Heart left ventricle (tissue), 16 donors: ENCODE measurements at regions of chr1 and their contacts with region 1.

Region 1: DNA sequence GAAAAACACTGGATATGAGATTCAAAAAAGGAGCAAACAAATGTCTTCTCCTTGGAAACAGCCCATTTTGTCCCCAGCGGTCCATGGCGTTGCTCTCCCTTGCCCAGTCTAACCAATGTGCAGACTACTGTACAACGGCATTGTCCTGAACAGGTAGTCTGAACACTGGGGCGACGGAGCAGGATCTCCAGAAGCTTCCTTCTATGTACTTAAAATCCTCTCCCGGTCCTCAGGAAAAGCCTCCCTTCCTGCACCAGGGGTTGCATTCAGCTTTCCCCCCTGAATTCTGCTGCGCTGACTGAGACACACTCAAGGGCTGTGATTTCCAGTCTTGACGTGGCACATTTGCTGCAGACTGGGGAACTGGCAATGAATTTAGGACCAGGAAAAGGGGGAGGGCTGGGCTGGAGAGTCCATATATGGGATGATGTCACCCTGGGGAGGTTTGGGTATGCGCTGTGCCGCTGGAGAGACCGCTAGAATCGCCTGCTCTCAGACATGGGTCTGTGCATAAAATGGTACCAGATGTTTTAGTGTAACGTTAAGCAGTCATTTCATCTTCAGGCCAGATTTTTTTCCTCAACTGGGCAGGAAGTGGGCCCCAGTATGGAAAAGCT is 275.9 kb upstream of the C1orf105 start:
- DNase-seq: peak; percentile 80 to 87 (median 85)
- ATAC-seq: peak; percentile 95 to 96 (median 96)
- H3K4me3 ChIP-seq: peak overlapping the region; percentile 25 to 70 (median 56)
- H3K27ac ChIP-seq: peak overlapping the region; percentile 70 to 89 (median 84)
- H3K4me1 ChIP-seq: peaks cover 0 to 39% (median 5%) of the 10 kb centered on the region in 12 donors
- H3K27me3 ChIP-seq: no peaks in the 10 kb centered on the region
- CTCF ChIP-seq: no peak
- POLR2A ChIP-seq: peak in 1 of 2 donors; percentile 86

Region 2: GRCh38 chr1:172180501-172181285 is 36.1 kb after region 1 on chr1:
- intact Hi-C with region 1: loop called in 5 of 10 experiments (anchors 2 to 5 kb)
- DNase-seq: peak; percentile 48 to 71 (median 61)
- ATAC-seq: peak; percentile 51 to 92 (median 84)
- H3K4me3 ChIP-seq: peak overlapping the region in 10 of 12 donors; percentile 6 to 45 (median 26)
- H3K27ac ChIP-seq: peak overlapping the region; percentile 22 to 93 (median 78)
- H3K4me1 ChIP-seq: peaks cover 4 to 43% (median 17%) of the 10 kb centered on the region in 12 donors
- H3K27me3 ChIP-seq: no peaks in the 10 kb centered on the region
- CTCF ChIP-seq: no peak
- POLR2A ChIP-seq: no peak